Activated CD8-positive, alpha-beta T cell treated with anti-CD3 and anti-CD28 coated beads for 36 hours (primary cell): ENCODE measurements at regions of chr2 and their contacts with region 1.

Region 1: DNA sequence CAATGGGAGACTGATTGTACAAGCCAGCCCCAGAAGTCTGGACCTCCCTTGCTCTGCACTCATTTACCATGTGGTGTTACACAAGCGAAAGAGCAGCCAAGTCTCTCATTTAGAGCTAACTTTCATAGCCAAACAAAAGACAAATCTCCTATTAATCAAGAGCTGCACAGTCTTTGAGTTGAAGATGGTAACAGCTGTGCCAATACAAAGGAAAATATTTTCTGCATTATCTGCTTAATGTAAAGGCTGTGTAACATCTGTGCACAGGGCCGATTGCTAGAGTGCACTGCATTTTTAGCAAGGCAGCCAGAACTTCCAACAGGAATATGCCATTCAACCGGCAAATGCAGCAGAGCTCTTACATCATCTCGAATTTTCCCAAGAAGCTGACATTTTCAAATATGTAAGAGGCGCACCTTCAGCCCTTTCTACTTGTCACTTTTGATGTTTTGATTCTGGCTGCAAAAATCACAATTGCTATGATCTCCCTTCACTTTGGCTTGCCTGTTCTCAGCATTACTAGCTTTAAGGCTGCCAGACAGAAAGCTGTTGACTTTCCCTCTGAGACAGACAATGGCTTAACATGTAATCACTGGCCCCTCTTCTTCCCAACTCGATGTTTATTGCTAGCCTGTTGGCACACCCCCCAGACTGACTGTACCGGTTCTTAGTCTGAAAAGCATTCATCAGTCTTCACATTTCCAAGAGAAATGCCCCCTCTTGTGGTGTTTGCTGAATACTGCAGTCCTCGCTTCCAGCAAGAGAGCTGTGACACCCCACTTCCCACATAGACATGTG is 96.9 kb upstream of the TANK start:
- DNase-seq: peak; percentile 80
- ATAC-seq: peak; percentile 93
- H3K4me3 Mint-ChIP-seq: no peak overlapping the region
- H3K27ac Mint-ChIP-seq: no peak overlapping the region
- H3K4me1 Mint-ChIP-seq: peaks cover 9% of the 10 kb centered on the region
- H3K27me3 Mint-ChIP-seq: peaks cover 1% of the 10 kb centered on the region
- CTCF ChIP-seq: peak; percentile 93

Region 2: DNA sequence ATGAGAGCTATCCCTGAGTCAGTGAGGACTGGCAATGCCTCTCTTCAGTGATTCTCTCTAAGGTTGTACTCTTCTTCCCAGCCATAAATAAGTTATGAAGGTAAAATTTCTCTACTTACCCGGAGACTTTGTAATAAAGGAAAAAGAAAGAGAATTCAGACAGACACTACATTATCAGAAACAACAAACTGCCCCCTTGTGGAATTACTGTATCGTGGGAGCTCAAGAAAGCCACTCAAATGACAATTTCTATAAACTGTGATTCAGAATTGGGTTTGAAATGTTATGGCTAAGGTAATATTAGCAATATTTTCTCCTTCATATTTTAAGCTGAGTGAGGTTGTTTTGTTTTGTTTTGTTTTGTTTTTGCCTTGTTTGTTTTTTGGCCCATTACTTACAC is 59.0 kb before region 1 on chr2:
- CTCF ChIA-PET with region 1: interaction called, 20 read pairs
- POLR2A ChIA-PET with region 1: no interaction called
- intact Hi-C with region 1: no loop called
- DNase-seq: no peak
- ATAC-seq: no peak
- H3K4me3 Mint-ChIP-seq: no peak overlapping the region
- H3K27ac Mint-ChIP-seq: no peak overlapping the region
- H3K4me1 Mint-ChIP-seq: no peaks in the 10 kb centered on the region
- H3K27me3 Mint-ChIP-seq: peaks cover 7% of the 10 kb centered on the region
- CTCF ChIP-seq: peak; percentile 32

Region 3: GRCh38 chr2:161077367-161078210 is 14.2 kb after region 1 on chr2:
- CTCF ChIA-PET with region 1: interaction called, 72 read pairs
- POLR2A ChIA-PET with region 1: interaction called, 3 read pairs
- intact Hi-C with region 1: no loop called
- DNase-seq: peak; percentile 92
- ATAC-seq: peak; percentile 85
- H3K4me3 Mint-ChIP-seq: peak overlapping the region; percentile 25
- H3K27ac Mint-ChIP-seq: peak overlapping the region; percentile 87
- H3K4me1 Mint-ChIP-seq: peaks cover 47% of the 10 kb centered on the region
- H3K27me3 Mint-ChIP-seq: no peaks in the 10 kb centered on the region
- CTCF ChIP-seq: no peak

Region 4: DNA sequence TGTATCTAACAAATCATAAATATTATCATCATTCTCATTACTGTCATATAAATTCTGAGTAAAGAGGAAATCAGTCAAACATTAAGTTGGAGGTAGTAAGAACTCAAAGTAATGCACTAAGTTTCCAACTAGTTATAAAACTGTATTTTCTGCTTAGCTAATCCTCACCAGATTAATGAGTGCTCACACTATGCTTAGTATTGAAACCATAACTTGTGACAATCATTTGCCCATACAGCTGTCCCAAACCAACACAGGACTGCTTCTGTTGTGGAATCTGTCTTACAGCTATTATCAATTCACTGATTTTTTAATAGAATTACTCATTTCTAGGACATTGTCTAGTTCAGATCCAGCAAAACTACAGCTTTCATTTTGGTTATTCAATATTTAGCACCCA is 55.4 kb after region 1 on chr2:
- CTCF ChIA-PET with region 1: interaction called, 16 read pairs
- POLR2A ChIA-PET with region 1: no interaction called
- intact Hi-C with region 1: no loop called
- DNase-seq: no peak
- ATAC-seq: no peak
- H3K4me3 Mint-ChIP-seq: no peak overlapping the region
- H3K27ac Mint-ChIP-seq: no peak overlapping the region
- H3K4me1 Mint-ChIP-seq: peaks cover 18% of the 10 kb centered on the region
- H3K27me3 Mint-ChIP-seq: peaks cover 6% of the 10 kb centered on the region
- CTCF ChIP-seq: no peak

Region 5: GRCh38 chr2:161223139-161223732 is 159.9 kb after region 1 on chr2:
- CTCF ChIA-PET with region 1: interaction called, 15 read pairs
- POLR2A ChIA-PET with region 1: no interaction called
- intact Hi-C with region 1: no loop called
- DNase-seq: no peak
- ATAC-seq: peak; percentile 75
- H3K4me3 Mint-ChIP-seq: no peak overlapping the region
- H3K27ac Mint-ChIP-seq: no peak overlapping the region
- H3K4me1 Mint-ChIP-seq: peaks cover 4% of the 10 kb centered on the region
- H3K27me3 Mint-ChIP-seq: no peaks in the 10 kb centered on the region
- CTCF ChIP-seq: peak; percentile 86

Region 6: GRCh38 chr2:161344692-161345091 is 281.3 kb after region 1 on chr2:
- CTCF ChIA-PET with region 1: no interaction called
- POLR2A ChIA-PET with region 1: no interaction called
- intact Hi-C with region 1: no loop called
- DNase-seq: no peak
- ATAC-seq: no peak
- H3K4me3 Mint-ChIP-seq: no peak overlapping the region
- H3K27ac Mint-ChIP-seq: no peak overlapping the region
- H3K4me1 Mint-ChIP-seq: peaks cover 9% of the 10 kb centered on the region
- H3K27me3 Mint-ChIP-seq: no peaks in the 10 kb centered on the region
- CTCF ChIP-seq: no peak

Region 7: DNA sequence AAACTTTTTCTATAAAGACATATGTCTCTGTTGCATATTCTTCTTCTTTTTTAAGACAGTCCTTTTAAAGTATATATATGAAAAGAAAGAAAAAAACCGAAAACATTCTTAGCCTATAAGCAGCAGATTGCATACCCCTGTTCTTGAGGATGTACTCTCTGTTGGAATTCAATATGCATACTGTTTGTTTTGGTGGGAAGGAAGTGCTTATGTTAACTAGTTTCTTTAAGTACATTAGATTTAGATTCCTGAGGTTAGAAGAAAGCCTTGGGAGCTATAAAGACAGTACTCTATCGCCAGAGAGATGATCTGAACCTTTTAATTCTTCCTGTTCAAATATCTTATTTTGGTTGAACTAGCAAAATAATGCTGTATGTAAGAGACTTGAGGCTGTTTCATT is 306.0 kb after region 1 on chr2:
- CTCF ChIA-PET with region 1: no interaction called
- POLR2A ChIA-PET with region 1: no interaction called
- intact Hi-C with region 1: no loop called
- DNase-seq: no peak
- ATAC-seq: no peak
- H3K4me3 Mint-ChIP-seq: no peak overlapping the region
- H3K27ac Mint-ChIP-seq: no peak overlapping the region
- H3K4me1 Mint-ChIP-seq: no peaks in the 10 kb centered on the region
- H3K27me3 Mint-ChIP-seq: no peaks in the 10 kb centered on the region
- CTCF ChIP-seq: no peak